Right cardiac atrium (tissue), 5 donors: ENCODE measurements at regions of chr1 and their contacts with region 1.

Region 1: GRCh38 chr1:168709405-168710305 is 19.4 kb downstream of the DPT start:
- DNase-seq: no peak
- ATAC-seq: peak; percentile 70 to 83
- H3K4me3 ChIP-seq: peak overlapping the region; percentile 3
- H3K27ac ChIP-seq: peak overlapping the region; percentile 74
- H3K4me1 ChIP-seq: peaks cover 2% of the 10 kb centered on the region
- H3K27me3 ChIP-seq: no peaks in the 10 kb centered on the region

Region 2: DNA sequence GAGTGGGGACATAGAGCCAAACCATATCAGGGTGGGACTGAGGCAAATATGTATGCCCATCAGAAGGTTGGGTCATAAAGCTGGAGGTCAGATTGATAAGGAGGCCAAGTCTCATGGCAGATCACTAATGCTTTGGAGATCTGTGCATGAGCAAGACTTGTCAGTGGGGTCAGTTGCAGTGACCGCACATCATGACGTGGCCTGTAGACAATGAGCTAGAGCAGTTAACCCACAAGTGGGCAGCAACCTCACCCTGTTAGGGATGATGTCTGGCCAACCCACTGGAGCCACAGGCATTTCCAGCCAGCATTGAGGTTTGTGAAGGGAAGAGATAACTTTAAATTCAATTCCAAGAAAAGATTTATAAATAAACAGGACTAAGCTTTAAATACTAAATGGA is 66.5 kb before region 1 on chr1:
- intact Hi-C with region 1: loop called in 1 of 4 experiments (anchors 10 kb)
- DNase-seq: no peak
- ATAC-seq: no peak
- H3K4me3 ChIP-seq: no peak overlapping the region
- H3K27ac ChIP-seq: no peak overlapping the region
- H3K4me1 ChIP-seq: no peaks in the 10 kb centered on the region
- H3K27me3 ChIP-seq: no peaks in the 10 kb centered on the region

Region 3: GRCh38 chr1:168752171-168752832 is 42.6 kb after region 1 on chr1:
- intact Hi-C with region 1: no loop called
- DNase-seq: no peak
- ATAC-seq: peak; percentile 51 to 92
- H3K4me3 ChIP-seq: no peak overlapping the region
- H3K27ac ChIP-seq: no peak overlapping the region
- H3K4me1 ChIP-seq: peaks cover 3% of the 10 kb centered on the region
- H3K27me3 ChIP-seq: no peaks in the 10 kb centered on the region